ENCODE measurements at regions of chr2 and their contacts with region 1.

Region 1: GRCh38 chr2:204611017-204611631 is 65.8 kb downstream of the PARD3B start:
- DNase-seq: peak; percentile 44 to 69
- H3K4me3 ChIP-seq: no peak overlapping the region
- H3K4me3 Mint-ChIP-seq: peak overlapping the region; percentile 52
- H3K27ac Mint-ChIP-seq: peak overlapping the region; percentile 85
- H3K4me1 ChIP-seq: peaks cover 60% of the 10 kb centered on the region
- H3K4me1 Mint-ChIP-seq: peaks cover 64% of the 10 kb centered on the region
- H3K27me3 ChIP-seq: no peaks in the 10 kb centered on the region
- H3K27me3 Mint-ChIP-seq: no peaks in the 10 kb centered on the region
- CTCF ChIP-seq: no peak

Region 2: DNA sequence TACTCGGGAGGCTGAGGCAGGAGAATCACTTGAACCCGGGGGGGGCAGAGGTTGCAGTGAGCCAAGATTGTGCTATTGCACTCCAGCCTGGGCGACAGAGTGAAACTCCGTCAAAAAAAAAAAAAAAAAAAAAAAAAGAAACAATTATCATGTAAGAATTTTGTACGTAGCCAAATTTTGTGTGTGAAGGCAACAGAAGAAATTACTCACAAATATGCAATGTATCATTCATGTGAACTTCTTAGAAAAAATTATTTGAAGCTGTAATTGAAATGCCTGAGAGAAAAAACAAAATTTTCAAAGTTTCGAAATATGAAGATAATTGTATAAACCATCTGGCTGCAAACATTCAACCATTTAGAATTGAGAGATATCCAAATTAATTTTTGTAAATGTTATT is 270.6 kb before region 1 on chr2:
- CTCF ChIA-PET with region 1: no interaction called
- POLR2A ChIA-PET with region 1: no interaction called
- intact Hi-C with region 1: loop called (anchors 1 kb)
- DNase-seq: no peak
- H3K4me3 ChIP-seq: no peak overlapping the region
- H3K4me3 Mint-ChIP-seq: peak overlapping the region; percentile 48
- H3K27ac Mint-ChIP-seq: peak overlapping the region; percentile 80
- H3K4me1 ChIP-seq: peaks cover 41% of the 10 kb centered on the region
- H3K4me1 Mint-ChIP-seq: peaks cover 45% of the 10 kb centered on the region
- H3K27me3 ChIP-seq: no peaks in the 10 kb centered on the region
- H3K27me3 Mint-ChIP-seq: no peaks in the 10 kb centered on the region
- CTCF ChIP-seq: no peak

Region 3: GRCh38 chr2:204428675-204429074 is 182.4 kb before region 1 on chr2:
- CTCF ChIA-PET with region 1: no interaction called
- POLR2A ChIA-PET with region 1: no interaction called
- intact Hi-C with region 1: no loop called
- DNase-seq: no peak
- H3K4me3 ChIP-seq: no peak overlapping the region
- H3K4me3 Mint-ChIP-seq: no peak overlapping the region
- H3K27ac Mint-ChIP-seq: no peak overlapping the region
- H3K4me1 ChIP-seq: no peaks in the 10 kb centered on the region
- H3K4me1 Mint-ChIP-seq: no peaks in the 10 kb centered on the region
- H3K27me3 ChIP-seq: no peaks in the 10 kb centered on the region
- H3K27me3 Mint-ChIP-seq: no peaks in the 10 kb centered on the region
- CTCF ChIP-seq: no peak

Region 4: DNA sequence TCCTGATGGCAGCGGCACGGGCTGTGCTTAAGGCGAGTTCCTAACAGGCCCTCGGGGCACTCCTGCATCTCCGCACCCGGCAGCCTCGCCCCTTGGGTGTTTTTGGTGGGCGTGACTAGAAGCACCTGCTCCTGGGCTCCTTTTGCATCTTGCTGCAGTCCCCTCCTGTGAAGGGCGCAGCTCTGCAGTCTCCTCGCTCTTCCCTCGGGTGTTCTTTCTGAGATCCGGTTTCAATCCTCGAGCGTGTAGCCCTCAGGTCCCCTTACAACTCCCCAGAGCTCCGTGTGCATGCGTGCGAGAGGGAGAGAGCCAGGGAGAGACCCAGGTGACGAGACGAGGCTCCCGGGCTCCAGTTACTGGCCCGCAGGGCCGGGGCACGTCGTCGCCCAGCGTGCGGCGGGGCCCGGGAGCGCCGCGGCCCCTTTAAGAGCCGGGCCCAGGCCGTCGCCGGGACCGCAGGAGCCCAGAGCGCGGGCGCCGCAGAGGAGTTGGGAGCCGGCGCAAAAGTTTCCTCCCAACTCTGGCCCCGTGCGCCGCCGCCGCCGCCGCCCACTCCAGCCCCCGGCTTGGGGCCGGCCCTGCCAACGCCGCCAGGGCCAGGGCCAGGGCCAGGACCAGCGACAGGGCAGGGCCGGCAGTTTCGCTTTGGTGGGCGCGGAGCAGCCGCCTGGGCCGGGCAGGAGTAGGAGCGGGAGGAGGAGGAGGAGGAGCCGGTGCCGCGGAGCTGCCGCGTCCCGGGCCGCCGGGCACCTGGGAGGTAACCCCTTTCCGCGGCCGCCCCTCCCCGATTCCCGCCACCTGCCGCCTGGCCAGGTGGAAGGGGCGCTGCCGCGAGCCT is 65.9 kb before region 1 on chr2 and contains the start of gene PARD3B:
- CTCF ChIA-PET with region 1: no interaction called
- POLR2A ChIA-PET with region 1: no interaction called
- intact Hi-C with region 1: loop called (anchors 1 kb)
- DNase-seq: peak; percentile 89 to 91
- H3K4me3 ChIP-seq: peak within 1 kb of the TSS; percentile 69
- H3K4me3 Mint-ChIP-seq: peak within 1 kb of the TSS; percentile 99
- H3K27ac Mint-ChIP-seq: peak within 1 kb of the TSS; percentile 99
- H3K4me1 ChIP-seq: peaks cover 39% of the 10 kb centered on the region
- H3K4me1 Mint-ChIP-seq: peaks cover 27% of the 10 kb centered on the region
- H3K27me3 ChIP-seq: no peaks in the 10 kb centered on the region
- H3K27me3 Mint-ChIP-seq: no peaks in the 10 kb centered on the region
- CTCF ChIP-seq: no peak
- total RNA-seq, gene PARD3B: 66.5 and 68.9 TPM in 2 replicates

Region 5: GRCh38 chr2:204550751-204551511 is 60.2 kb before region 1 on chr2:
- CTCF ChIA-PET with region 1: no interaction called
- POLR2A ChIA-PET with region 1: no interaction called
- intact Hi-C with region 1: loop called (anchors 1 kb)
- DNase-seq: no peak
- H3K4me3 ChIP-seq: no peak overlapping the region
- H3K4me3 Mint-ChIP-seq: peak overlapping the region; percentile 58
- H3K27ac Mint-ChIP-seq: peak overlapping the region; percentile 49
- H3K4me1 ChIP-seq: peaks cover 47% of the 10 kb centered on the region
- H3K4me1 Mint-ChIP-seq: peaks cover 31% of the 10 kb centered on the region
- H3K27me3 ChIP-seq: no peaks in the 10 kb centered on the region
- H3K27me3 Mint-ChIP-seq: no peaks in the 10 kb centered on the region
- CTCF ChIP-seq: no peak

Region 6: DNA sequence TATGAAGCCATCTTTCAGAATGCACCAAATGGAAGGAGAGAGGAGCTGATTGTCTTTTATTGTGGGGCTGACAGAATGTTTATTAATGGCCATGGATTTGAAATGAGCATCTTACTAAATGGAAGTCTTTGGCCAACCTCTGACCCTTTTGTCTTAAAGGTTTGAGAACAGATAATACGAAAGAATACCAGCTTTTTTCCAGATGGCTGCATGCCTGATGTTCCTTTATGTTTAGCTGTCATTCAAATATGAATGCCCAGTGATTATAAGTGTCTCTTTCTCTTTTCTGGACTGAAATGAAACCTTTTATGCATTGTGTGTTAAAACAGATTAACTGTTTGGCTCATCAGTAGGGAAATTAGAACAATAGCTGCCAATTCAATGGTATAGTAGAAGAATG is 19.9 kb before region 1 on chr2:
- CTCF ChIA-PET with region 1: no interaction called
- POLR2A ChIA-PET with region 1: no interaction called
- intact Hi-C with region 1: loop called (anchors 2 kb)
- DNase-seq: no peak
- H3K4me3 ChIP-seq: no peak overlapping the region
- H3K4me3 Mint-ChIP-seq: no peak overlapping the region
- H3K27ac Mint-ChIP-seq: no peak overlapping the region
- H3K4me1 ChIP-seq: peaks cover 14% of the 10 kb centered on the region
- H3K4me1 Mint-ChIP-seq: peaks cover 10% of the 10 kb centered on the region
- H3K27me3 ChIP-seq: no peaks in the 10 kb centered on the region
- H3K27me3 Mint-ChIP-seq: no peaks in the 10 kb centered on the region
- CTCF ChIP-seq: no peak

Region 7: GRCh38 chr2:204664708-204665121 is 53.6 kb after region 1 on chr2:
- CTCF ChIA-PET with region 1: interaction called, 3 read pairs
- POLR2A ChIA-PET with region 1: no interaction called
- intact Hi-C with region 1: loop called (anchors 1 kb)
- DNase-seq: peak in 1 of 2 experiments; percentile 43
- H3K4me3 ChIP-seq: no peak overlapping the region
- H3K4me3 Mint-ChIP-seq: peak overlapping the region; percentile 17
- H3K27ac Mint-ChIP-seq: no peak overlapping the region
- H3K4me1 ChIP-seq: peaks cover 75% of the 10 kb centered on the region
- H3K4me1 Mint-ChIP-seq: peaks cover 28% of the 10 kb centered on the region
- H3K27me3 ChIP-seq: no peaks in the 10 kb centered on the region
- H3K27me3 Mint-ChIP-seq: no peaks in the 10 kb centered on the region
- CTCF ChIP-seq: no peak

Region 8: GRCh38 chr2:204673877-204674276 is 62.8 kb after region 1 on chr2:
- CTCF ChIA-PET with region 1: interaction called, 3 read pairs
- POLR2A ChIA-PET with region 1: no interaction called
- intact Hi-C with region 1: loop called (anchors 1 kb)
- DNase-seq: no peak
- H3K4me3 ChIP-seq: no peak overlapping the region
- H3K4me3 Mint-ChIP-seq: no peak overlapping the region
- H3K27ac Mint-ChIP-seq: peak overlapping the region; percentile 6
- H3K4me1 ChIP-seq: peaks cover 44% of the 10 kb centered on the region
- H3K4me1 Mint-ChIP-seq: peaks cover 43% of the 10 kb centered on the region
- H3K27me3 ChIP-seq: no peaks in the 10 kb centered on the region
- H3K27me3 Mint-ChIP-seq: no peaks in the 10 kb centered on the region
- CTCF ChIP-seq: no peak

Measured in Caco-2 (cell line).